Activated CD8-positive, alpha-beta T cell treated with anti-CD3 and anti-CD28 coated beads, Interleukin-2, amount 10 ng/mL, durations not matched to agents 7 days and 5 days (primary cell): ENCODE measurements at regions of chr16 and their contacts with region 1.

Region 1: GRCh38 chr16:77236063-77236511 is 36.9 kb downstream of the SYCE1L start:
- DNase-seq: peak; percentile 91
- ATAC-seq: peak; percentile 99
- H3K4me3 Mint-ChIP-seq: no peak overlapping the region
- H3K27ac Mint-ChIP-seq: no peak overlapping the region
- H3K4me1 Mint-ChIP-seq: peaks cover 3% of the 10 kb centered on the region
- H3K27me3 Mint-ChIP-seq: peaks cover 2% of the 10 kb centered on the region

Region 2: DNA sequence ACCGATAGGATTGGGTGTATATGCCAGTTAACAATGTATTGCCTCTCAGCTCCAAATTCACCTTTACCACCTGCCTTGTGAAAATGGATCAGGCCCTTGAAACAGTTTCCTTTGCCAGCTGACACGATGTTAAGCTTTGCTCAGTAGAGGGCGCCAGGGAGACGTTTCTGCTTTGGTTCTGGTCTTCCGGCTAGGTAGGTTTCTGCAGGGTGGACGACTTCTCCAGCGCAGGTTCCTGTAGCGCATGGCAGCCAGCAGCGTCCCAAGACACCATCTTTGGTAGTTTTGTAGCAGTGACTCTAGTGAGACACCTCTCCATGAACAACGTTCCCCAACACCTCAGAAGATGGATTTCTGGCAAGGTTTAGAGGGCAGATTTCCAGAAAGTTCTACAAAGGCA is 12.9 kb before region 1 on chr16:
- CTCF ChIA-PET with region 1: interaction called, 11 read pairs
- POLR2A ChIA-PET with region 1: no interaction called
- DNase-seq: peak; percentile 46
- ATAC-seq: no peak
- H3K4me3 Mint-ChIP-seq: no peak overlapping the region
- H3K27ac Mint-ChIP-seq: no peak overlapping the region
- H3K4me1 Mint-ChIP-seq: no peaks in the 10 kb centered on the region
- H3K27me3 Mint-ChIP-seq: no peaks in the 10 kb centered on the region

Region 3: DNA sequence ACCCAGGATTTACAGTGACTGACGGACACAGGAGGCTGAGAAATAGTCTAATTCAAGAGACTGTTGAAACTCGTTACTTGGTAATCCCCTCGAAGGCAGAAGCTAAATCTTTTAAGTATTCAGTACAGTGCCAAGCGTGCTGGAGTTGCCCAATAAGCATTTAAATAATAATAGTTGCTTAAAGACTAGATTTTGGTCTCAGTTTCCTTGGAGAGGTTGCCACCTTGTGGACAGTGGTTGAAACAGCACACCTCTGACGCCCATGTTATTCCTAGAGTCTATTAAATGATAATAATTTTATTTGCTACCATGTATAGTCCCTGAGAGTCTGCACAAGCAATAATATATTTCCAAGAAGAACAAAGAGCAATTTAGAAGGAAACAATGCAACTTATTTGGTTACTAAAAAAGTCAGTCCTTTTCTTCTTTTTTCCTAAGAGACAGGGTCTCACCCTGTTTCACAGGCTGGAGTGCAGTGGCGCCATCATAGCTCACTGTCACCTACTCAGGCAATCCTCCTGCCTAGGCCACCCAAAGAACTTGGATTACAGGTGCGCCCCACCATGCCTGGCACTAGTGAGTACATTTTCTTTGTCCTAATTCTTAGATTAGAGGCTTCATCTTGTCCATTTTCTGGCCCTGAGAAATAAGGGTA is 348.2 kb after region 1 on chr16:
- CTCF ChIA-PET with region 1: interaction called, 114 read pairs
- POLR2A ChIA-PET with region 1: interaction called, 4 read pairs
- DNase-seq: peak; percentile 56
- ATAC-seq: no peak
- H3K4me3 Mint-ChIP-seq: no peak overlapping the region
- H3K27ac Mint-ChIP-seq: no peak overlapping the region
- H3K4me1 Mint-ChIP-seq: no peaks in the 10 kb centered on the region
- H3K27me3 Mint-ChIP-seq: peaks cover 5% of the 10 kb centered on the region